Natural killer cell (primary cell): ENCODE measurements at regions of chr22 and their contacts with region 1.

Region 1: GRCh38 chr22:20916983-20917810 is at the start of gene CRKL:
- DNase-seq: peak; percentile 93 to 99
- ATAC-seq: peak; percentile 90 to 98 (median 94)
- H3K4me3 ChIP-seq: peak within 1 kb of the TSS; percentile 97
- H3K4me3 Mint-ChIP-seq: peak within 1 kb of the TSS; percentile 98
- H3K27ac ChIP-seq: peak within 1 kb of the TSS; percentile 87
- H3K27ac Mint-ChIP-seq: peak within 1 kb of the TSS; percentile 95 to 98
- H3K4me1 ChIP-seq: peaks cover 31% of the 10 kb centered on the region
- H3K4me1 Mint-ChIP-seq: peaks cover 53% of the 10 kb centered on the region in 2 donors
- H3K27me3 ChIP-seq: no peaks in the 10 kb centered on the region
- H3K27me3 Mint-ChIP-seq: no peaks in the 10 kb centered on the region
- CTCF ChIP-seq: peak; percentile 71
- total RNA-seq, gene CRKL: 50.7 to 71.2 (median 67.4) TPM

Region 2: GRCh38 chr22:20858615-20859416 is 58.4 kb before region 1 on chr22 and contains the starts of genes PI4KA and SNAP29:
- intact Hi-C with region 1: loop called (anchors 1 kb)
- DNase-seq: peak; percentile 97 to 98
- ATAC-seq: peak; percentile 89 to 97 (median 91)
- H3K4me3 ChIP-seq: peak within 1 kb of the TSS; percentile 97
- H3K4me3 Mint-ChIP-seq: peak within 1 kb of the TSS; percentile 94
- H3K27ac ChIP-seq: peak within 1 kb of the TSS; percentile 86
- H3K27ac Mint-ChIP-seq: peak within 1 kb of the TSS; percentile 89 to 92
- H3K4me1 ChIP-seq: peaks cover 59% of the 10 kb centered on the region
- H3K4me1 Mint-ChIP-seq: peaks cover 56 to 73% of the 10 kb centered on the region in 2 donors
- H3K27me3 ChIP-seq: no peaks in the 10 kb centered on the region
- H3K27me3 Mint-ChIP-seq: no peaks in the 10 kb centered on the region
- CTCF ChIP-seq: no peak
- total RNA-seq, gene PI4KA: 208 to 233 (median 215) TPM
- total RNA-seq, gene SNAP29: 35.1 to 40.3 (median 36.8) TPM

Region 3: DNA sequence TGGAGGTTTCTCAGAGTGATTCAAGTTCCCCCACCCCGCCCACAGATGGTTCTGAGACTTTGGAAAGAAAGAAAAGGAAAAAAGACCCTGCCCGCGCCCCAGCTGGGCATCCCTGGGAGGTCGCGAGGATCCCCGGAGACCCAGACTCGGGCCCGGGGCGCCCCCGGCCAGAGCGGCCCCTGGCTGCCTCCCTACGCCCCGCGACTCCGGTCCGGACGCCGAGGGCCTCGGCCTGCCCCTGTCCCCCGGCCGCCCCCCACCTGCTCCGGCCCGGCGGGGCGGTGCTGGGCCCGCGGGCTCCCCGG is 47.6 kb after region 1 on chr22:
- intact Hi-C with region 1: loop called (anchors 5 kb)
- DNase-seq: no peak
- ATAC-seq: no peak
- H3K4me3 ChIP-seq: peak overlapping the region; percentile 12
- H3K4me3 Mint-ChIP-seq: peak overlapping the region; percentile 81
- H3K27ac ChIP-seq: no peak overlapping the region
- H3K27ac Mint-ChIP-seq: no peak overlapping the region
- H3K4me1 ChIP-seq: peaks cover 33% of the 10 kb centered on the region
- H3K4me1 Mint-ChIP-seq: peaks cover 5 to 11% of the 10 kb centered on the region in 2 donors
- H3K27me3 ChIP-seq: peaks cover 9% of the 10 kb centered on the region
- H3K27me3 Mint-ChIP-seq: peaks cover 6 to 10% of the 10 kb centered on the region in 2 donors
- CTCF ChIP-seq: no peak

Region 4: DNA sequence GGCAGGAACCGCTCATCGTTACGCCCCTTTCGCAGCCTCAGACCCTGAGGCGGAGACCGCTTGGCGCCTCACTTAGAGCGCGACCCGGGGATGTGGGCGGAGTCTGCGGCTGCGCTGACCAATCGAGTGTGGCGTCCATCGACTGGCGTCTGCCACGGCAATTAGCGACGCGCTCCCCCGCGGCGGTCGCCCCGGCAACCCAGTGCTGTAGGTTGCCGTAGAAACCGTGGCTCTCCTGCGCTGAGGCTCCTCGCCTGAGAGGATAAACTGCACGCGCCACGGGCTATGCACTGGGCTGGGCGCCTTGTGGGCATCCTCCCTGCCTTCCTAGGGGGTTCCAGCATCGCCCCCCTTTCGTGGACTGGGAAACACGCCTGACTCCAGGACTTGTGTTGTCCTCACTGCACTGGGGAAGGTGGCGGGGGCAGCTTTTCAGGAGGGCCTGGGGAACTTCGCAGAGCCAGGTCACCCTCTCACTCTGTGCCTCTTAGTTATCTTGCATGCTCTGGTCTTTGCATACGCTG is 97.1 kb after region 1 on chr22:
- intact Hi-C with region 1: loop called (anchors 5 kb)
- DNase-seq: peak; percentile 90 to 93
- ATAC-seq: peak; percentile 93 to 94 (median 94)
- H3K4me3 ChIP-seq: peak overlapping the region; percentile 49
- H3K4me3 Mint-ChIP-seq: peak overlapping the region; percentile 95
- H3K27ac ChIP-seq: peak overlapping the region; percentile 90
- H3K27ac Mint-ChIP-seq: peak overlapping the region; percentile 95 to 97
- H3K4me1 ChIP-seq: peaks cover 29% of the 10 kb centered on the region
- H3K4me1 Mint-ChIP-seq: peaks cover 16 to 31% of the 10 kb centered on the region in 2 donors
- H3K27me3 ChIP-seq: no peaks in the 10 kb centered on the region
- H3K27me3 Mint-ChIP-seq: no peaks in the 10 kb centered on the region
- CTCF ChIP-seq: no peak